ENCODE measurements at regions of chr2 and their contacts with region 1.

Region 1: DNA sequence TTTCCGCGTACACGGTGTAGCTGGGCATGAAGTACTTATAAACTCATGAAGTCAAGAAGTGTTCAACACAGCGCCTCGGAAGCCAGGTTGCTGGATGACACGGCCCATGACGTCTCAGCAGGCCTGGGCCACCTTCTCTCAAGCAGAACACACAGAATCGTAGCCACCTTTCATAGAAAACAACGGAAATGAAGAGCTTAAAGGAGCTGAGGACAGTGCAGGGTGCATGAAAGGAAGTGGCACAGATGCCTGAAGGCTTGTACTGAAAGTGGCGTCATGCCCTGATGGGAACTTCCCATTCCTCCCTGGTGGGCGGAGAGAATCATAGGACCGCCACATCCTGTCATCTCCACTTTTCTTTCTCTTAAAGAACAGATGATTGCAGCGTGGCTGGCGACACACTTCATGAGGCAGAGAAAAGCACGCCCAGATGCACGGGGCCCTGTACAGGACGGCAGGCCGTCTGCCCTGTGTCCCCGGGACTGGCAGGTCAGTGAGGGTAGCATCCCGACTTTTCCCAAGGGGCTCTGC is 31.1 kb downstream of the HDAC4 start:
- DNase-seq: peak; percentile 86
- H3K4me3 Mint-ChIP-seq: peak overlapping the region; percentile 69
- H3K27ac Mint-ChIP-seq: no peak overlapping the region
- H3K4me1 Mint-ChIP-seq: peaks cover 11% of the 10 kb centered on the region
- H3K27me3 Mint-ChIP-seq: no peaks in the 10 kb centered on the region

Region 2: DNA sequence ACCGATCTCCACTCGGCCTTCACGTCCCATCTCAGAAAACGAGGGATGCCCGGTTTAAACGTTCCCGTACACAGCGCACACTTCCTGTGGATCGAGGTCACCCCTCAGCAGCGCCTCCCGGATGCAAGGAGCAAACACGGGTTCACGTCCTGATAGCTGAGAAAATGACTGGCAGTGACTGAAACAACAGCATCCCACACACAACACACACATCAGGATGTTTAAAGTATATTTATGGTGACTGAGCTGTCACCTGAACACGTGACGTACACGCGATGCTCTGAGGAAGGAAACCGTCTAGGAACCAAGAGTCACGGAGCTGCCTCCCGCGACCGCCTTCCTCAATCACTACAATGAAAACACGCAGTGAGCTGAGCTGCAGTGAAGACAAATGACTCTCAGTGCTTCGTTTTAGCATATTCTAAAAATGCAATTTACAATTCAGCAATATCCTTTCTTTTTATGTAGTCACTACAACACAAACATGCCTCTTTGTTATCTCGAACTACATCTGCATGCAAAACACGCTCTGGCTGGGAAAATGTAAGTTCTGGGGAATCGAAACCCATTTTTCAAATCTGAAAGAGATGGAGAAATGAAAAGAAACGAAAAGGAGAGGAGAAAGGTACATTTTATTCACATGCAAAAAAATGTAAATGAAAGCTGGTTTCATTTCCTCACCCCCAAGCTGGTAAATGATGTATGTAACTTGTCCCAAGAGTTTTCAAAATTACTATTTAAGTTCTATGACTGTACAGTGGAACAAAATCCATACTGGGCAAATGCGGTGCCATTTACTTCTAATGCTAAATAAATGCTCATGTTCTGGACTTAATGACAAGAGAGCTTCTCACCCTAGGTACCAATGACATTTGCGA is 11.4 kb after region 1 on chr2:
- CTCF ChIA-PET with region 1: interaction called, 19 read pairs
- POLR2A ChIA-PET with region 1: no interaction called
- DNase-seq: peak; percentile 76
- H3K4me3 Mint-ChIP-seq: peak overlapping the region; percentile 65
- H3K27ac Mint-ChIP-seq: peak overlapping the region; percentile 91
- H3K4me1 Mint-ChIP-seq: peaks cover 41% of the 10 kb centered on the region
- H3K27me3 Mint-ChIP-seq: no peaks in the 10 kb centered on the region

Region 3: GRCh38 chr2:239429473-239430350 is 60.0 kb after region 1 on chr2:
- CTCF ChIA-PET with region 1: no interaction called
- POLR2A ChIA-PET with region 1: no interaction called
- DNase-seq: no peak
- H3K4me3 Mint-ChIP-seq: no peak overlapping the region
- H3K27ac Mint-ChIP-seq: no peak overlapping the region
- H3K4me1 Mint-ChIP-seq: peaks cover 3% of the 10 kb centered on the region
- H3K27me3 Mint-ChIP-seq: peaks cover 23% of the 10 kb centered on the region

Measured in activated CD4-positive, alpha-beta T cell treated with anti-CD3 and anti-CD28 coated beads, Interleukin-2, amount 10 ng/mL, durations not matched to agents 7 days and 5 days (primary cell).